CD4-positive, alpha-beta T cell (primary cell): ENCODE measurements at regions of chr2 and their contacts with region 1.

Region 1: GRCh38 chr2:72825241-72826155 is at the start of gene EXOC6B:
- DNase-seq: peak; percentile 64 to 92 (median 86)
- ATAC-seq: peak; percentile 90
- H3K4me3 ChIP-seq: peak within 1 kb of the TSS; percentile 74
- H3K4me3 Mint-ChIP-seq: peak within 1 kb of the TSS; percentile 94
- H3K27ac ChIP-seq: no peak within 1 kb of the TSS
- H3K27ac Mint-ChIP-seq: peak within 1 kb of the TSS; percentile 78
- H3K4me1 ChIP-seq: peaks cover 12% of the 10 kb centered on the region
- H3K4me1 Mint-ChIP-seq: peaks cover 48% of the 10 kb centered on the region
- H3K27me3 ChIP-seq: peaks cover 0 to 4% of the 10 kb centered on the region in 2 experiments
- H3K27me3 Mint-ChIP-seq: peaks cover 8% of the 10 kb centered on the region
- CTCF ChIP-seq: no peak
- total RNA-seq, gene EXOC6B: 16.9 to 17.5 TPM

Region 2: DNA sequence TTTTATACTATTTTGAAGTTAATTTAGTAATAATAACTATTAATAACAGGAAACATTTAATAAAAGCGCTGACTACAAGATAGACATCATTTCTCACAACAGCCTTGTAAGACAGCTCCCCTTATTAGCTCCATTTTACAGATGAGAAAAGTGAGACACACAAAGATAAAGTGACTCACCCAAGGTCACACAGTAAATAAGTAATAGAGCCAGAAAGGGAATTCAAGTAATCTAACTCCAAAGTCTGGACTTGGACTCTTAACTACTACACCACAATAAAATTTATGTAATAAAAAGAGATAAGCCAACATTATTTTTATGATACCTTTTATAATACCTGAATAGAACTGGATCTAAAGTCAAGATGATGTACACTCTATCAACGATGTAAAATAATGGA is 25.0 kb before region 1 on chr2:
- CTCF ChIA-PET with region 1: interaction called, 4 read pairs
- POLR2A ChIA-PET with region 1: no interaction called
- intact Hi-C with region 1: loop called in 1 of 2 experiments (anchors 1 kb)
- DNase-seq: no peak
- ATAC-seq: no peak
- H3K4me3 ChIP-seq: no peak overlapping the region
- H3K4me3 Mint-ChIP-seq: no peak overlapping the region
- H3K27ac ChIP-seq: no peak overlapping the region
- H3K27ac Mint-ChIP-seq: no peak overlapping the region
- H3K4me1 ChIP-seq: no peaks in the 10 kb centered on the region
- H3K4me1 Mint-ChIP-seq: peaks cover 6% of the 10 kb centered on the region
- H3K27me3 ChIP-seq: no peaks in the 10 kb centered on the region
- H3K27me3 Mint-ChIP-seq: no peaks in the 10 kb centered on the region
- CTCF ChIP-seq: no peak

Region 3: DNA sequence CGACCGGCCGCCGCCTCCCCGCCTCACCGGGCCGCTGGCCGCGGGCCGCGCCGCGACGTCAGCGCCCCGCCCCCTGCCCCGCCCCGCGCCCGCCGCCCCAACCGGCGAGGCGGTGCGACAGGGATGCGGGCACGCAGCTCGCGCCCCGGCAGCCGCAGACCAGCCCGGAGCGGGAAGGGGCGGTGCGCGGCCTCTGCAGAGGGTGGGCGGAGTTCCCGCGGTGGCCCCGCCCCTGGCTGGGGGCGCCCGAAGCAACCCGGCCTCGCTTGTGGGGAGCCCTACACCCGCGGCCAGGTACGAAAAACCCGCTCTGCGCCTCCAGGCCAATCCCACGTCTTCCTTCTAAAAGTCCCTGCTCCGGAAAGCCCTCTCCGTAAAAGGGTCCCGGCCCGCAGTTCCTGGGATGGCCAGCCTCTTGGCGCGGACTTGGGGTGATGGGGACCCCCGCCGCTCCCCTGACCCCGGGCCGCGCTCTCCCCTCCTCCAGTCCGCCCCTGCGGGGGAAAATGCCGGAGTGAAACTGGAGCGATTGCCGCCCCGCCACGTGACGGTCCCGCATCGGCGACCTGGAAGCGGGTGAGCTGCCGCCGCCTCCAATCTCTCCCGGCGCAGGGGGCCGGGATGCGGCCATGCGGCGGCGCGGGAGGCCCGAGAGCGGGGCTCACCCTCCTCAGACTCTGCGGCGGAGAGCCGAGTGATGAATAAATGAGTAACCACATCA is 287.6 kb after region 1 on chr2 and contains the start of gene RAB11FIP5:
- CTCF ChIA-PET with region 1: no interaction called
- POLR2A ChIA-PET with region 1: no interaction called
- intact Hi-C with region 1: loop called in 1 of 2 experiments (anchors 5 kb)
- DNase-seq: peak; percentile 58 to 93 (median 75)
- ATAC-seq: peak; percentile 90
- H3K4me3 ChIP-seq: peak within 1 kb of the TSS; percentile 84
- H3K4me3 Mint-ChIP-seq: peak within 1 kb of the TSS; percentile 86
- H3K27ac ChIP-seq: peak within 1 kb of the TSS in 1 of 2 donors; percentile 21
- H3K27ac Mint-ChIP-seq: peak within 1 kb of the TSS; percentile 65
- H3K4me1 ChIP-seq: peaks cover 35% of the 10 kb centered on the region
- H3K4me1 Mint-ChIP-seq: peaks cover 27% of the 10 kb centered on the region
- H3K27me3 ChIP-seq: no peaks in the 10 kb centered on the region
- H3K27me3 Mint-ChIP-seq: no peaks in the 10 kb centered on the region
- CTCF ChIP-seq: no peak
- total RNA-seq, gene RAB11FIP5: 12.6 to 13.8 TPM

Region 4: GRCh38 chr2:73284296-73285158 is 459.0 kb after region 1 on chr2 and contains the start of gene FBXO41:
- CTCF ChIA-PET with region 1: no interaction called
- POLR2A ChIA-PET with region 1: no interaction called
- intact Hi-C with region 1: loop called in 1 of 2 experiments (anchors 10 kb)
- DNase-seq: peak; percentile 36 to 79 (median 59)
- ATAC-seq: peak; percentile 79
- H3K4me3 ChIP-seq: peak within 1 kb of the TSS; percentile 73
- H3K4me3 Mint-ChIP-seq: peak within 1 kb of the TSS; percentile 91
- H3K27ac ChIP-seq: peak within 1 kb of the TSS in 1 of 2 donors; percentile 33
- H3K27ac Mint-ChIP-seq: peak within 1 kb of the TSS; percentile 37
- H3K4me1 ChIP-seq: peaks cover 22% of the 10 kb centered on the region
- H3K4me1 Mint-ChIP-seq: peaks cover 22% of the 10 kb centered on the region
- H3K27me3 ChIP-seq: no peaks in the 10 kb centered on the region
- H3K27me3 Mint-ChIP-seq: peaks cover 15% of the 10 kb centered on the region
- CTCF ChIP-seq: no peak
- total RNA-seq, gene FBXO41: 14.0 to 16.0 TPM